Breast epithelium (tissue), 4 donors: ENCODE measurements at regions of chr10 and their contacts with region 1.

Region 1: DNA sequence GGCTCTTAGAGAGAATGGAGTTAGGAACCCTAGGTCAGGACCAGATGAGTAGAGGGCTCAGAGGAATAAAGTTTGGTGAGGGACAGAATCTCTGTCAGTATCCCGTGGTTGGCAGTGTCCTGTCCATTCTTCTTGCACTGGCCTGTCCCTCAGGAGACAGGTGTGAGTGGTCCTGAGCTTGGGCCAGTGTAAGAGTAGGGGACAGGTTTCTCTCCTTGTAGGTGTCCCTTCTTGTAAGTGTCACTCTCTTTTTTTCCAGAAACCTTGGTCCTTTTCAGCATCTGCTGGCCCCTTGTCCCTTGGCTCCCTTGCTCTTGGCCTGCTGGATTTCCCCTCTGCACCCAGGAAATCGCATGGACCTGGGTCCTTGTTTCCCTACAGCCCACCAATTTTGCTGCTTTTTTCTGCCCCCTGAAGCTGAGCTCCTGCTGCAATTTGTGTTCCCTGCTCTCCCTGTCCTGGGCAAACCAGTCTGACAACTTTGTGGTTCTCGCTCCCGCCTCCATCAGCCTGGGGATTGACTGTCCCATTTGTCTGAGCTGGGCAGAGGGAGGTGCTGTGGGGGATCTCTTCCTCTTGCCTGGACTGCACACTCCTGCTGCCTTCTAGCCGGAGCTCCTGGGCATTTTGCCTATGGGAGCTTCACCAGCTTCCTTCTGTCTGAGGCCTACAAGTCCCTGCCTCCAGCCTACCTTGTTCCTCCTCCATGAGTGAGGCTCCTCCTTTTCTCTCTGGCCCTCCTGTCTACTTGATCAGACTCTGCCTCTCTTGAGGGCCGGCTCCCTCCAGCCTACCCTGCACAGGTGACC is 6.5 kb downstream of the TSPAN14 start:
- DNase-seq: peak; percentile 89 to 96
- H3K4me3 ChIP-seq: peak overlapping the region in 2 of 3 donors; percentile 8 to 47
- H3K27ac ChIP-seq: peak overlapping the region; percentile 92 to 94
- H3K4me1 ChIP-seq: peaks cover 54 to 84% of the 10 kb centered on the region in 2 donors
- H3K27me3 ChIP-seq: no peaks in the 10 kb centered on the region
- CTCF ChIP-seq: no peak
- POLR2A ChIP-seq: no peak

Region 2: GRCh38 chr10:79502561-79503309 is 957.9 kb before region 1 on chr10:
- intact Hi-C with region 1: no loop called
- DNase-seq: peak in 1 of 2 donors; percentile 28
- H3K4me3 ChIP-seq: no peak overlapping the region
- H3K27ac ChIP-seq: no peak overlapping the region
- H3K4me1 ChIP-seq: no peaks in the 10 kb centered on the region
- H3K27me3 ChIP-seq: no peaks in the 10 kb centered on the region
- CTCF ChIP-seq: peak in 1 of 3 donors; percentile 23
- POLR2A ChIP-seq: no peak

Region 3: GRCh38 chr10:80500572-80501380 is 40.2 kb after region 1 on chr10:
- intact Hi-C with region 1: loop called (anchors 5 kb)
- DNase-seq: no peak
- H3K4me3 ChIP-seq: no peak overlapping the region
- H3K27ac ChIP-seq: peak overlapping the region; percentile 92 to 96
- H3K4me1 ChIP-seq: peaks cover 41 to 60% of the 10 kb centered on the region in 2 donors
- H3K27me3 ChIP-seq: no peaks in the 10 kb centered on the region
- CTCF ChIP-seq: peak in 2 of 3 donors; percentile 6 to 14
- POLR2A ChIP-seq: no peak